ENCODE measurements at regions of chr2 and their contacts with region 1.

Region 1: DNA sequence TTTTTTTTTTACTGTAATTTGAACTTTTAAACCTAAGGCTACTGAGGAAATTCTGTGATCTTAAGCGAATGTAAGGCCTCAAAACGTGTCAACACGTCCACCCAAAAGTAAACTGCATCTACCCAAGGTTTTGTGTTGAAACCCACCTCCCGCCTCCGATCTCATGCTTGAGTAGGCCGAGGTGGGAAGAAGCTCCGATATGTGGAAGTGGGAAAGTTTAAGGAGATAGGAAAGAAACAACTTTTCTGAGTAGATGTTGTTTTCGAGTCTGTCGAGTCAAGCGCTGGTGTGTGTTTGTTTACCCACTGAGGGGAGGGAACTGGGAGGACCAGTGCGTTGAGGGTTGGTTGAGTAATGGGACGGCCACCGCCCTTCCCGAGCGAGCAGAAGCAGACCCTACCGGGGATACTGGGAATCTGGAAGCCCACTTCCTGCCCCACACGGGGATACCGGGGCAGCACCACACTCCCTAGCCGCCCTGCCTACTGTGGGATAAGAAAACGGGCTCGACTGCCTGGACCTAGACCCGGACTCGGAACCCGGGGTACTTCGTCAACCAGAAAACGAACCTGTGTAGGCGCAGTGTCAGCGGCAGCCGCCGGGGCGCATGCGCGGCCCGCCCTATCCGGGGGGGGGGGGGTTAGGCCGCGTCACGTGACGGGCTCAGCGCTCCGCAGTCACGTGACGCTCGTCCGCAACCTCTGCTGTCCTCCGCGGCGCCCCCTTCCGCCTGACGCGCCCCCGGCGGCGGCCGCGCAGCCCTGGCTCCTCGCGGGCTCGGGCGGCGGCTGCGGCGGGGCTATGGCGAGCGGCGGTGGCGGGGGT is at the start of gene RETREG2:
- DNase-seq: peak; percentile 90
- ATAC-seq: peak; percentile 60
- H3K4me3 Mint-ChIP-seq: peak within 1 kb of the TSS; percentile 86
- H3K27ac Mint-ChIP-seq: peak within 1 kb of the TSS; percentile 97
- H3K4me1 Mint-ChIP-seq: peaks cover 52% of the 10 kb centered on the region
- H3K27me3 Mint-ChIP-seq: no peaks in the 10 kb centered on the region
- total RNA-seq, gene RETREG2: 58.8 to 70.1 TPM

Region 2: DNA sequence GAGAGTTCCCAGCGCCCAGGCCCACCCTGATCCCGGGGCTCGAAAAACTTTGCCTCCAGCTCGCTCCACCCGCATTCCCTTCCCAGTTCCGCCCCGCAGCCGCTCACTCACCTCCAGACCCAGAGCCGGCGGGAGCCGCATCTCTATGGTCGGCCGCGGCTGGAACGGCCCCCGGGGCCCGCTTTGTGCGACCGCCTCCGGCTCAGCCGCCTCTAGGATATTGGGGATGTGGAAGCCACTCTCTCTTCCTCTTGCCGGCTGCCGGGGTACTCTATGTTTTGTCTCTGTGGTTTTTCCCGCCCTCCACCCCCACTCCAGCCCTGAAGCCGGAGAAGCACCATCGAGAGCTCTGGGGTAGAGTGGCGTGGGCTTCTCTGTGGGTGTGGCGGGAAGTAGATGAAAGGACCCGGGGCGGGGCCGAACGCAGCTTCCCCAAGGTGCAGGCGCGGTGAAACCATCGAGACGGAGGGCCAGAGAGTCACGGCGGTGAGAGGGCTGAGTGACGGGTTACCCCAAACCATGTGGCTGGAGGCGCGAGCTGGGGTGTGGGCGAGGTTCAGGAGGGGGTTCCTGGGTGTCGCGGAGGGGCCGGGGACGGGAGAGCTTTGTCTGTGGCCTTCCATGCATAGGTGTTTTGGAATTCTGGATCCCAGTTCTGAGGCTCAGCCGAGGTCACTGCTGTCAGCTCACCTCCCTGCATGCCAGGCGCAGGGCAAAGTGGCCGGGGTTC is 518.3 kb before region 1 on chr2 and contains the starts of genes BCS1L and ZNF142:
- CTCF ChIA-PET with region 1: no interaction called
- POLR2A ChIA-PET with region 1: no interaction called
- intact Hi-C with region 1: loop called in 1 of 2 experiments (anchors 5 kb)
- DNase-seq: peak; percentile 98
- ATAC-seq: peak; percentile 95
- H3K4me3 Mint-ChIP-seq: peak within 1 kb of the TSS; percentile 88
- H3K27ac Mint-ChIP-seq: peak within 1 kb of the TSS; percentile 89
- H3K4me1 Mint-ChIP-seq: peaks cover 35% of the 10 kb centered on the region
- H3K27me3 Mint-ChIP-seq: no peaks in the 10 kb centered on the region
- total RNA-seq, gene BCS1L: 74.3 to 92.3 TPM
- total RNA-seq, gene ZNF142: 31.5 to 42.4 TPM

Region 3: GRCh38 chr2:218898109-218898878 is 279.5 kb before region 1 on chr2:
- CTCF ChIA-PET with region 1: no interaction called
- POLR2A ChIA-PET with region 1: no interaction called
- intact Hi-C with region 1: loop called in 1 of 2 experiments (anchors 1 kb)
- DNase-seq: peak; percentile 91
- ATAC-seq: peak; percentile 15
- H3K4me3 Mint-ChIP-seq: peak overlapping the region; percentile 49
- H3K27ac Mint-ChIP-seq: no peak overlapping the region
- H3K4me1 Mint-ChIP-seq: peaks cover 42% of the 10 kb centered on the region
- H3K27me3 Mint-ChIP-seq: peaks cover 30% of the 10 kb centered on the region

Region 4: DNA sequence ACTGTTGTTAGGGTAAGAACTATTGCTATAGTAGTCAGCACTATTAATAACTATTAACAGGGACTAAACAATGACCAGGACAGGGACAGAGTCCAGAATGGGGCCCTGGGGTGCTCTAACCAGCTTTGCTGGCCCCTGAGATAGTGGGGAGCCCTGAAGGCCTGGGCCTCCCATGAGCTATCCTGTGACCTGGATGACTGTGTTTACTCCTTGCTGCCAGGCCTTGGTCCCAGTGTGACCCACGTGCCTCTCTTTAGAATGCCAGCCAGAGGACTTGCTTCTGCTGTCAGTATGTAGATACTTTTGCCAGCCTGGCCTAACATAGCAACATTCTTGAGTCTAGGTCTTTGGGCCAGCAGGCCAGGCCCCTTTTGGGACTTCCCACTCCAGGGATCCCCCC is 206.9 kb before region 1 on chr2:
- CTCF ChIA-PET with region 1: no interaction called
- POLR2A ChIA-PET with region 1: no interaction called
- intact Hi-C with region 1: no loop called
- DNase-seq: no peak
- ATAC-seq: no peak
- H3K4me3 Mint-ChIP-seq: no peak overlapping the region
- H3K27ac Mint-ChIP-seq: no peak overlapping the region
- H3K4me1 Mint-ChIP-seq: no peaks in the 10 kb centered on the region
- H3K27me3 Mint-ChIP-seq: peaks cover 46% of the 10 kb centered on the region

Region 5: DNA sequence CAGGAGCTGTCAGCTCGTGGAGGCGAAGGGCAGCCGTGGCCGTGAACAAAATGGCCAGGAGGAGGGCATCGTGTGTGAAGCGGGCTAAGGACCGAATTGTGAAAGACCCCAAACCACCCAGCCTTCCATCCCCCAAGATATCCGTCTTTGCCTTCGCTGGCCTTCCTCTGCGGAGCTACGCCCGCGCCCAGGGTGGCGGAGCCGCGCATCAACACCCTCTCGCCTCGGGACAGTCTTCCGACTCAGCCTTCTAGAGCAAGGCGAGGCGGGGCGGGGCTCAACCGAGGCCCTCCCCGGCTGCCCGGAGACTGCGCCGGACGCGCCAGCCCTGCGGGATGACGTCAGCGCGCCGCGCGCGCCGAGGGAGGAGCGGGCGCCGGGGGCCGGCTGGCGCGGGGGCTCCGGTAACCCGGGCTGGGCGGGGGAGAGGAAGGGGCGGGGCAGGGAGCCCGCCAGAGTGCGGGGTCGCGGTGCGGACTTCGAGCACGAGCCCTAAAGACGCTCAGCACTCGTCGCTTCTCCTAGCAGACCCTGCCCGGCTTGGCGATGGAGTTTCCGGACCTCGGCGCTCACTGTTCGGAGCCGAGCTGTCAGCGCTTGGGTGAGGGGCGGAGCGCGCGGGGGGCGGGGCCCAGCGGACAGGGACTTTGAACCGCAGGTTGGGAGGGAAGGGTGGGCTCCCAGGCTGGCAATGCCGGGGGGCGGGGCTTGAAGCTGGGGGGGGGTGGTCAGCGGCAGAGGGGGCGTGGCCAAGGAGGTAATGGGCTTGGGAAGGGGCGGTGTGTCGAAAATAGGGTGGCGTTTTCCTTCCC is 28.9 kb after region 1 on chr2 and contains the start of gene ZFAND2B:
- CTCF ChIA-PET with region 1: interaction called, 12 read pairs
- POLR2A ChIA-PET with region 1: interaction called, 8 read pairs
- intact Hi-C with region 1: loop called (anchors 1 kb)
- DNase-seq: peak; percentile 98
- ATAC-seq: peak; percentile 96
- H3K4me3 Mint-ChIP-seq: peak within 1 kb of the TSS; percentile 86
- H3K27ac Mint-ChIP-seq: peak within 1 kb of the TSS; percentile 94
- H3K4me1 Mint-ChIP-seq: peaks cover 34% of the 10 kb centered on the region
- H3K27me3 Mint-ChIP-seq: no peaks in the 10 kb centered on the region
- total RNA-seq, gene ZFAND2B: 21.5 to 27.6 TPM

Region 6: DNA sequence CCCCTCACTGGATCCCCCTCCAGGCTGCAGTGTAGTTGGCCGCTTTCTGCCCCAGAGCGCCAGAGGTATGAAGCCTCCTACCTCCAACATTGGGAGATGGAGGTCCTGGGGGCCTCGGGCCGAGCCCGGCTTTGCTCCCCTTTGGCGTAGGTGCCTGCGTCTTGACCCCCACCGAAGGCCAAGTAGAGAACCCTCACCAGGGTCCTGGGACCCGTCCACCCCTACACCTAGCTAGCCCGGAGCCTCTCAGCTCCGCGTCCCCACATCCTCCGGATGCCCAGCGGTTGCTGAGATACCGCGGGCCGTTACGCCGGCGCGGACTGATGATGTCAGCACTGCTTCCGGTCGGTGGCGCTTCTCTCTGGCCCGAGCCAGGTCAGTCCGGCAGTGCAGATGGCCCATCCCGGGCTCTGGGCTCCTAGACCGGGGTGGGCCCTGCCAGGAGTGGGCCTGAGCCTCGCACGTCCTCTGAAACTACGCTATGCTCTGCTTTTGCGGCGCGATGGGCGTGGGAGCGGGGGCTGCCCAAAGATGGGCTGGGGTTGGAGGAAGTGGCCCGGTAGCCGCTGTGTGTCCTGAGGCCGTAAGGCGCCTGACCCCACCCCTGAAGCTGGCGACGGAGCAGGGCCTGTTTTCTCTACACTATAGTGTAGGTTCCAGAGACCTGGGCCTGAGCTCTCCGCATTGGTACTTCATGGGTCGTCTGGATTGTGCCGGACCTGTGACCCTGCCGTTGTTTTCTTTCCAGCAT is 67.6 kb after region 1 on chr2 and contains the starts of genes GLB1L and STK16:
- CTCF ChIA-PET with region 1: interaction called, 5 read pairs
- POLR2A ChIA-PET with region 1: no interaction called
- intact Hi-C with region 1: loop called (anchors 1 to 2 kb)
- DNase-seq: peak; percentile 93
- ATAC-seq: peak; percentile 62
- H3K4me3 Mint-ChIP-seq: peak within 1 kb of the TSS; percentile 89
- H3K27ac Mint-ChIP-seq: peak within 1 kb of the TSS; percentile 100
- H3K4me1 Mint-ChIP-seq: peaks cover 59% of the 10 kb centered on the region
- H3K27me3 Mint-ChIP-seq: no peaks in the 10 kb centered on the region
- total RNA-seq, gene GLB1L: 2.7 to 4.2 TPM
- total RNA-seq, gene STK16: 34.3 to 35.4 TPM

Region 7: DNA sequence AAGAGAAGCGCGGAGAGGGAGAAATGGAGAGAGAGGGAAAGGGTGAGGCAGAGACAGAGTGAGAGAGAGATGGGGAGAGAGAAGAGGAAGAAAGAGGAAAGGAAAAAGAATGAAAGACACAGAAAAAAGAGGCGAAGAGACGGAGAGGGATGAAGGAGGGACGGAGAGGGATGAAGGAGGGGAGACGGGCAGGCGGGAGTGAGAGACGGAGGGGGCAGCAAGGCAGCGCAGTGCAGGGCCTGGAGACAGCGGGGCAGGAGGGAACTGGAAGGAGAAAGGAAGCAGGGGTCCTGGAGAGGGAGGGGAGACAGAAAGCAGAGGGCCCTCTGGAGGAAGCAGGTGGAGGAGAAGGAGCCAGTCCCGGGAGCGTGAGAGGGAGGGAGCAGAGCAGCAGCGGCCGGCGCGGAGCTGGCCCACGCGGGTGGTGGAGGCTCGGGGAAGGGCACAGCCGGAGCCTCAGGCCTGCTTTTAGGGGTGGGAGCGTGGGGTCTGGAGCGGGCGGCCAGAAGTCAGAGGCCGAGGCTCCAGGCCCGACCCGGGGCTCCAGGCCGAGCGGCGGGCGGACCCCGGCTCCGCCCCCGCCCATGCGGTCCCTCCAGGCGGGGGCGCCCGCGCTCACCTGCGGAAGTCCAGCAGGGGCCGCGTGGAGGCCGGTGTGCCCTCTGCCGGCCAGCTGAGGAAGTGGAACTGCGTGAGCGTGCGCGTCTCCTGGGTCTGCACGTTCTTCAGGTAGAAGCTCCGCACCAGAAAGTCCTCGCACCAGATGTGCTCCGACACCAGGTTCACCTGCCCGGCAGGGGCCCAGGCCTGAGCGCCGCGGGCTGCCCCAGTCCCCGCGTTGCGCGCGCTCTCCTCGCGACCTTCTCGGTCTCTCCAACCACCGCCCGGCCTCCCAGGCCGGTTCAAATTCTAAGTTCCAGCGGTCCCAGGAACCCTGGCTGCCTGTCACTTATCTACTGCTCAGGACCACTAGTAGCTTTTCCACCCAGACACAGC is 116.9 kb after region 1 on chr2:
- CTCF ChIA-PET with region 1: interaction called, 29 read pairs
- POLR2A ChIA-PET with region 1: interaction called, 5 read pairs
- intact Hi-C with region 1: loop called (anchors 1 to 5 kb)
- DNase-seq: peak; percentile 93
- ATAC-seq: peak; percentile 90
- H3K4me3 Mint-ChIP-seq: peak overlapping the region; percentile 68
- H3K27ac Mint-ChIP-seq: peak overlapping the region; percentile 84
- H3K4me1 Mint-ChIP-seq: peaks cover 22% of the 10 kb centered on the region
- H3K27me3 Mint-ChIP-seq: no peaks in the 10 kb centered on the region

Region 8: DNA sequence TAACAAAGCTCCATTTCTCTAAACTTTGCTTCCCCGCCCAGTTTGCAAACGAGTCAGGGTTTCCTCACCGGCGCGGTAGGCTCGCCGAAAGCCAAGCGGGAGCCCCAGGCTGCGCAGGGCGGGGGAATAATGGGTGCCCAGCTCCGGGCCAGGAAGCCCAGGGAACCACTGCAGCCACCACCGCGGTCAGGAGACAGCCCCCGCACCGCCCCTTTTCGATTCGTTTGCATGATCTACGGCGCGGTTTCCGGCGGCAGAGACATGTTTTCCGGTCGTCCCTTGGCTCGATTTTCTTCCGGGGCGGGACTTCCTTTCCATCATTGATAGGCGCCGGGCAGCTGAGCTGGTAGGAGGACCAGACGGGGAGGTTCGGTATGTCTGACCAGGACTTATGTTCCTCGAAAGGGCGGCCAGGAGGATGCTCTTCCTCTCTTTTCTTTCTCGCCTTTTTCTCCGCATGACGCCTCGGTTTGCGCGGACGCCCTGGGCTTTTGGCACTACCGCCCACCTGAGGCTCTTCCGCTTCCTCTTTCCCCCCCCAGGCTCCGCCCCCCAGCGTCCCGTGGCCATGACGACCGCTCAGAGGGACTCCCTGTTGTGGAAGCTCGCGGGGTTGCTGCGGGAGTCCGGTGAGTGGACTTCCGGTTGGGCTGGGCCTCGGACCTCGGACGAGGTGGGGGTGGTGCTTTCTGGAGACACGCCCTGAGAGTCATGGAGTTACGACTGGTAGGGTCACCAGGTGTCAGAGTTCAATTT is 420.0 kb after region 1 on chr2 and contains the start of gene STK11IP:
- CTCF ChIA-PET with region 1: no interaction called
- POLR2A ChIA-PET with region 1: no interaction called
- intact Hi-C with region 1: loop called in 1 of 2 experiments (anchors 1 kb)
- DNase-seq: peak; percentile 95
- ATAC-seq: peak; percentile 91
- H3K4me3 Mint-ChIP-seq: peak within 1 kb of the TSS; percentile 82
- H3K27ac Mint-ChIP-seq: peak within 1 kb of the TSS; percentile 97
- H3K4me1 Mint-ChIP-seq: peaks cover 16% of the 10 kb centered on the region
- H3K27me3 Mint-ChIP-seq: peaks cover 4% of the 10 kb centered on the region
- total RNA-seq, gene STK11IP: 23.5 to 26.1 TPM